ENCODE measurements at regions of chr11 and their contacts with region 1.

Region 1: GRCh38 chr11:75399344-75400145 is at the start of gene RPS3:
- DNase-seq: peak; percentile 86
- H3K4me3 Mint-ChIP-seq: peak within 1 kb of the TSS; percentile 99
- H3K27ac Mint-ChIP-seq: peak within 1 kb of the TSS; percentile 90
- H3K4me1 Mint-ChIP-seq: peaks cover 51% of the 10 kb centered on the region
- H3K27me3 Mint-ChIP-seq: peaks cover 3% of the 10 kb centered on the region
- total RNA-seq, gene RPS3: 2,822 and 2,924 TPM in 2 replicates

Region 2: DNA sequence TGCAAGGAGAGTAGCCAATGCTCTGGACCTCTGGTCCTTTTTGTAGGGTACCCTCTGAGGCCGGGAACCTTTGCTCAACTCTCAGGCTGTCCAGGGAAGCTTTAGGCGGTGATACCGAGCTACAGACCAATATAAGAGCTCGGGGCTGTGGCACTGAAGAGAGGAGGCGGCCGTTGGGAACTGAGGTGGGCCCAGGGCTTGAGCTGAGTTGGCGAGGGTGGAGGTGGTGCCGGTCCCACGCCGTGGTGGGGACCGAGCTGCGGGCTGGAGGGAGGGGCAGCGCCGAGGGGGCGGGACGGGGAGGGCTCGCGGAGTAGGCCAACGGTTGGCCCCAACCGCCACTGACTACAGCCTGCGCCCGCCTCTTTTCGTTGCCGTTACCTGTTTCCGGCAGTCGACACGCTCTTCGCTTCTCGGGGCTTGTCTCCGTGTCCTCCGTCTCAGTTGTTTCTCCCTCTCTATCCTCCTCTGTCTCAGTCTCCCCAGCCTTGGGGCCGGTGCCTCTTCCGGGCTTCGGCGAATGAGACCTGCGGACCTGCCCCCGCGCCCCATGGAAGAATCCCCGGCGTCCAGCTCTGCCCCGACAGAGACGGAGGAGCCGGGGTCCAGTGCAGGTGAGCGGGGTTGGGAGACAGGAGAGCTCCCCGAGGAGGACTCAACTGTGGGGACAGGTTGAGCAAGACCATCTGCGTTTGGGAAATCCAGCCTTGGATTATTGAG is 410.8 kb before region 1 on chr11 and contains the start of gene NEU3:
- intact Hi-C with region 1: loop called (anchors 2 kb)
- DNase-seq: peak; percentile 79
- H3K4me3 Mint-ChIP-seq: peak within 1 kb of the TSS; percentile 94
- H3K27ac Mint-ChIP-seq: peak within 1 kb of the TSS; percentile 81
- H3K4me1 Mint-ChIP-seq: peaks cover 30% of the 10 kb centered on the region
- H3K27me3 Mint-ChIP-seq: no peaks in the 10 kb centered on the region
- total RNA-seq, gene NEU3: 16.3 and 16.9 TPM in 2 replicates

Region 3: DNA sequence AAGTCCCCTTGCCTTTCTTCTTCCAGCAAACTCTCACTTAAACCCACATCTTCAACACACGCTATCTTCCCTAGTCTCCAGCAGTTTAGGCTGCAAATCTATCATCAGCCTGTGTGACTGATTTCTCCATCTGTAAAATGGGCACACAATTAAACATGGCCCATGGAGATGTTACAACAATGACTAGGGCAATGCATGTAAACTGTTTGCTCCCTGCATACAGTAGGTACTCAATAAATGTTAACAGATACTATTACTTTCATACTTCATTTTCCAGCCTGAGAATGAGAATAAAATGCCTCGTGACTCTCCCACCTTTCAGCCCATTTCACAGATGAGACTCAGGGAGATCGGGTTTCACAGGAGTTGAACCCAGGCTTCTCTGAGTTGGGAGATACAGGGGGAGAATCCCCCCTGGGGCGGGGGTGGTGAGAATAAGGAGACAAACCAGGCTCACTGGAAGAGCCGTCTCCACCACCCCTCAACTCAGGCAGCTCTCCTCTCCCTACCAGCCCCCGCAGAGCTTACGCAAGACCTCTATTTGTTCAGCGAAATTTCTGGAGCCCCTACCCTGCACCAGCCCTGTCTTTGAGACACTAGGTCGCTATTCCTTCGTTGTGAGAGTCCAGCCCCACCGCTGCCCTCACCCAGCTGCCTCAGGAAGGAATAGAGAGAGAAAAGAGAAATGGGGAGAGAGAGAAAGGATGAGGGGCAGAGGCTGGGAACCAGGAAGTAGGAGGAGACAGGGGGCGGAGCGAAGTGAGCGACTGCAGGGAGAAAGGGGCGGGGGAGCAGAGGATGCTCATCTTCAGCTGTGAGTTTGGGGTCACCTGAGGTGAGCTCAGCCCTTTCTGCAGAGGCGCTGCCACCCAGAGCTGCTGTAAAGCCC is 75.6 kb after region 1 on chr11:
- intact Hi-C with region 1: loop called (anchors 1 kb)
- DNase-seq: peak; percentile 58
- H3K4me3 Mint-ChIP-seq: no peak overlapping the region
- H3K27ac Mint-ChIP-seq: peak overlapping the region; percentile 70
- H3K4me1 Mint-ChIP-seq: peaks cover 17% of the 10 kb centered on the region
- H3K27me3 Mint-ChIP-seq: no peaks in the 10 kb centered on the region

Measured in activated T-helper 1 cell treated with anti-CD3 and anti-CD28 coated beads, Interleukin-12 subunit alpha, Interleukin-12 subunit beta, Interleukin-2, Interleukin-4 antibody, amounts not matched to agents 30 ng/mL and 10 ng/mL and 1 ng/mL, durations not matched to agents 14 hours and 24 hours and 36 hours (primary cell).